Posterior vena cava (tissue), 2 donors: ENCODE measurements at regions of chr22 and their contacts with region 1.

Region 1: DNA sequence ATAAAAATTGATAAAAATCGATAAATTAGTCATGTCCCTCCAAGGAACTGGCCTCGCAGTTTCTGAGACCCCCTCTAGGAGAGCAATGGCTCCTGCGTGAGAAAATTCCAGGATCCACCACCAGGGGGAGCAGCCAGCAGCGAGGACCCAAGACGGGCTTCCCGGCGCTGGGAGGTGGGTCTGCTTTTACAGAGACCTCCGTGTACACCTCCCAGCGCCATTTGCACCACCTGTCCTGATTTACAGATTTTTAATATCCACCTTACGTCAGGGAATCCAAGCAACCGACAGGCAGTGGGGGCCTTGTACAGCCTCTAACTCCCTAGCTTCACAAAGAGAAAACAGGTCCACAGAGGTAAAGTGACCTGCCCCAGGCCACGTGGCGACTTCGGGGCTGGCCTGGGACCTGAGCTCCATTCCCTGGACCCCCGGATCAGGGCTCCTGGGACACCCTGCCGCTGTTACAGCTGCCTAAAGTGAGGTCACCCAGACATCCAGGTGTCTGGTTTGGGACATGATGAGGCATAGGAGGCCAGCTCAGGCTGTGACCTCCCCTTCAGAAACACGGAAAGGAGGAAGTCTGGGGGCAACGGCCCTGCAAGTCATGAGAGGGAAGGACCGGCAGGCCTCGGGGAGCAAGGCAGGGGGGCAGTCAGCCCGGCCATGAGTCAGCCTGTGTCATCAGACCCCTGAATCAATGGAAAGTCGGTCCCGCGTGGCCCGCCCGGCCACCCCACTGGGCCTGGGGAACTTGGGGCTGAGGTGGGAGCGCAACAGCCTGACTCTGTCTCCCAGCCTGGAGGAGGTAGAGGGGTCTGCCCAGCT is 3.5 kb downstream of the OSM start:
- DNase-seq: peak; percentile 91

Region 2: GRCh38 chr22:30287648-30288418 is 24.7 kb after region 1 on chr22:
- intact Hi-C with region 1: loop called in 1 of 2 experiments (anchors 2 kb)
- DNase-seq: peak; percentile 95

Region 3: DNA sequence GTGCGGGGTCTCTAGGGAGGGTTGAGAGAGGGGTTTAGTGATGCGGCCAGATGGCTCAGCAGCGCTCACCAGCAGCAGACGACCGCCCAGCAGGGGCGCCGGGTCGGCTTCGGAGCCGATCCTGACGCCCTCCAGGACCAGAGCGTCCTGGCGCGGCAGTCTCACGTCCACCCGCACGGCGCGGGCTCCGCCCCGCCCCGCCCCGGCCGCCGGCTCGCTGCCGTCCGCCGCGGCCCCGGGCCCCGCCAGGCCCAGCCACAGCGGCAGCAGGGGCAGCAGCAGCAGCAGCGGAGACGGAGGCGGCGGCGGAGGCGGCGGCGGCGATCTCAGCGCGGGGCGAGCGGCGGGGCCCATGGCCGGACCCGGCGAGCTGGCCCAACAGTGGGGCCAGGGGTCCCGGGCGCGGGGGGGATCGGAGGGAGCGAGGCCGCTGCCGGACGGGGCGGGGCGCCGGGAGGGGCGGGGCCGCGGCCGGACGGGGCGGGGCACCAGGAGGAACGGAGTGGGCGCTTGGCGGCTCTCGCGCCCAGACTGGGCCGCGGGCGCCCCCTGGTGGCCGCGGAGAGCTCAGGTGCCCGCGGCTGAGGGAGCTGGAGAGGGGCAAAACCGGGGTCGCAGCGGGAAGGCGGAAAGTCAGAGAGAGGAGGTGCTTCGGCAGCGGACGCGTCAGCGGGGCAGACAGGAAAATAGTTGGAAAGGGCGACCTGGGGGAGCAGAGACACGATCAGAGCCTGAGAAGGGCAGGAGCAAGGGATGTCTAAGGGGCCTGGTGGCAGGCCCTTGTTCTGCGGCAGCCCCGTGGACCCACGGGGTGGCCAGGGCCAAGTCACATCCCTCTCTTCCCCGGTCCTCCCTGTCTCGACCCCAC is 124.1 kb after region 1 on chr22 and contains the start of gene RNF215:
- intact Hi-C with region 1: loop called (anchors 2 kb)
- DNase-seq: peak; percentile 94
- total RNA-seq, gene RNF215: 9.3 to 15.6 TPM

Region 4: GRCh38 chr22:31707519-31707918 is 1444.4 kb after region 1 on chr22:
- intact Hi-C with region 1: no loop called
- DNase-seq: peak; percentile 35